ENCODE measurements at regions of chr15 and their contacts with region 1.

Region 1: GRCh38 chr15:94004697-94005096 is 226.7 kb upstream of the MCTP2 start:
- DNase-seq: no peak
- ATAC-seq: no peak
- H3K4me3 ChIP-seq: no peak overlapping the region
- H3K27ac ChIP-seq: no peak overlapping the region
- H3K4me1 ChIP-seq: no peaks in the 10 kb centered on the region
- H3K27me3 ChIP-seq: no peaks in the 10 kb centered on the region
- CTCF ChIP-seq: no peak

Region 2: GRCh38 chr15:94119923-94120775 is 115.5 kb after region 1 on chr15:
- CTCF ChIA-PET with region 1: no interaction called
- POLR2A ChIA-PET with region 1: no interaction called
- in situ Hi-C with region 1: no loop called
- intact Hi-C with region 1: loop called (anchors 2 kb)
- DNase-seq: peak; percentile 77
- ATAC-seq: peak; percentile 99
- H3K4me3 ChIP-seq: no peak overlapping the region
- H3K27ac ChIP-seq: no peak overlapping the region
- H3K4me1 ChIP-seq: no peaks in the 10 kb centered on the region
- H3K27me3 ChIP-seq: no peaks in the 10 kb centered on the region
- CTCF ChIP-seq: peak; percentile 94

Region 3: DNA sequence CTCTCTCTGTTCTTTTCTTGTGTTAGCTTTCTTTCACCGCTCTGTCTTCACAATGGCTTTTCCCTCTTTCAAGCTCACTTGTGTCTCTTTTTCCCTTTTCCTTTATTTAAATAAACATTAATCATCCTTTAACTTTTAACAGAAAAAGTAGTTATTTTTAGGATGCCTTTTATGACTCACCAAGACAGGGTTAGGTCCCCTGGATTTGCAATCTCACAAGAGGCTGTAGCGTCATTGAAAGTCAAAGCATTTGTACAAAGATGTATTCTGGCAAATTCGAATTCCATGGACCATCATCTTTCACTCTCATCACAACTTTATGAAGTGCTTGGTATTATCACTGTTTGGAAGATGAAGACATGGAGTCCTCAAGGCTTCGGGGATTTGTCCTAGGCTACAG is 191.8 kb after region 1 on chr15:
- CTCF ChIA-PET with region 1: no interaction called
- POLR2A ChIA-PET with region 1: no interaction called
- in situ Hi-C with region 1: no loop called
- intact Hi-C with region 1: no loop called
- DNase-seq: no peak
- ATAC-seq: no peak
- H3K4me3 ChIP-seq: no peak overlapping the region
- H3K27ac ChIP-seq: no peak overlapping the region
- H3K4me1 ChIP-seq: no peaks in the 10 kb centered on the region
- H3K27me3 ChIP-seq: no peaks in the 10 kb centered on the region
- CTCF ChIP-seq: no peak

Region 4: GRCh38 chr15:94485148-94485719 is 480.5 kb after region 1 on chr15:
- CTCF ChIA-PET with region 1: no interaction called
- POLR2A ChIA-PET with region 1: interaction called, 15 read pairs
- in situ Hi-C with region 1: no loop called
- intact Hi-C with region 1: no loop called
- DNase-seq: no peak
- ATAC-seq: no peak
- H3K4me3 ChIP-seq: no peak overlapping the region
- H3K27ac ChIP-seq: no peak overlapping the region
- H3K4me1 ChIP-seq: no peaks in the 10 kb centered on the region
- H3K27me3 ChIP-seq: no peaks in the 10 kb centered on the region
- CTCF ChIP-seq: no peak